Heart right ventricle (tissue), 16 donors: ENCODE measurements at regions of chr16 and their contacts with region 1.

Region 1: GRCh38 chr16:4475880-4476788 is at the start of gene HMOX2:
- DNase-seq: peak; percentile 90 to 95
- ATAC-seq: peak; percentile 94 to 96 (median 96)
- H3K4me3 ChIP-seq: peak within 1 kb of the TSS; percentile 82 to 99 (median 93)
- H3K27ac ChIP-seq: peak within 1 kb of the TSS; percentile 87 to 97 (median 94)
- H3K4me1 ChIP-seq: peaks cover 4 to 49% (median 35%) of the 10 kb centered on the region in 9 donors
- H3K27me3 ChIP-seq: no peaks in the 10 kb centered on the region
- CTCF ChIP-seq: peak in 8 of 9 donors; percentile 26 to 72 (median 44)
- total RNA-seq, gene HMOX2: 58.4 to 207 (median 84.8) TPM

Region 2: DNA sequence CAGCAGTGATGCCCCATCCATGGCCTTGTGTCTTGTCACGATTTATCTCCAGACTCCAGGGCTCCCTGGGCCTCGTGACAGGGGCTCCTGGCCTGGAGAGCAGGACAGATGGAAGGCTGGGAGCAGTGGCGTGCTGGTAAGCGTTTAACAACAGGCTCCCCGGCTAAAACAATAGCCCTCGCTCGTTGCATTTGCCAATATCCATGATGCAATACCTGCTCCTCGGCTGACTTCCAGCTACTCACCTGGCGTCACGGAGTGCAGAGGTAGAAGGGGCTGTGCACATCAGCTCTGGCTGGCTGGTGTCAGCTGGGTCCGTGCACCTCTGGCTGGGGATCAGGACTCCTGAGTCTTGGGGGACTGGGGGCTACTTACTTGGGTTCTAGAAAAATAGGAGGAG is 1437.9 kb before region 1 on chr16:
- intact Hi-C with region 1: loop called in 1 of 10 experiments (anchors 5 kb)
- DNase-seq: no peak
- ATAC-seq: no peak
- H3K4me3 ChIP-seq: no peak overlapping the region
- H3K27ac ChIP-seq: no peak overlapping the region
- H3K4me1 ChIP-seq: peaks cover 0 to 16% (median 7%) of the 10 kb centered on the region in 9 donors
- H3K27me3 ChIP-seq: peaks cover 16 to 99% (median 94%) of the 10 kb centered on the region in 7 donors
- CTCF ChIP-seq: no peak

Region 3: GRCh38 chr16:4425378-4426020 is 50.6 kb before region 1 on chr16 and contains the start of gene DNAJA3:
- intact Hi-C with region 1: loop called in 1 of 10 experiments (anchors 5 kb)
- DNase-seq: peak; percentile 90 to 93
- ATAC-seq: peak; percentile 97 to 99 (median 98)
- H3K4me3 ChIP-seq: peak within 1 kb of the TSS; percentile 69 to 97 (median 83)
- H3K27ac ChIP-seq: peak within 1 kb of the TSS; percentile 90 to 99 (median 96)
- H3K4me1 ChIP-seq: peaks cover 0 to 36% (median 21%) of the 10 kb centered on the region in 9 donors
- H3K27me3 ChIP-seq: no peaks in the 10 kb centered on the region
- CTCF ChIP-seq: peak in 1 of 9 donors; percentile 6
- total RNA-seq, gene DNAJA3: 51.4 to 76.7 (median 72.5) TPM

Region 4: GRCh38 chr16:4538350-4539235 is 62.5 kb after region 1 on chr16 and contains the start of gene CDIP1:
- intact Hi-C with region 1: loop called in 1 of 10 experiments (anchors 5 kb)
- DNase-seq: peak; percentile 97
- ATAC-seq: peak; percentile 94 to 97 (median 96)
- H3K4me3 ChIP-seq: peak within 1 kb of the TSS; percentile 72 to 98 (median 82)
- H3K27ac ChIP-seq: peak within 1 kb of the TSS; percentile 42 to 97 (median 92)
- H3K4me1 ChIP-seq: peaks cover 0 to 39% (median 24%) of the 10 kb centered on the region in 9 donors
- H3K27me3 ChIP-seq: no peaks in the 10 kb centered on the region
- CTCF ChIP-seq: peak in 4 of 9 donors; percentile 18 to 36 (median 26)
- total RNA-seq, gene CDIP1: 38.0 to 59.5 (median 47.0) TPM

Region 5: GRCh38 chr16:4743226-4743897 is 267.2 kb after region 1 on chr16:
- intact Hi-C with region 1: no loop called
- DNase-seq: no peak
- ATAC-seq: peak in 4 of 8 donors; percentile 13 to 43 (median 29)
- H3K4me3 ChIP-seq: peak overlapping the region in 3 of 10 donors; percentile 15 to 32 (median 21)
- H3K27ac ChIP-seq: no peak overlapping the region
- H3K4me1 ChIP-seq: peaks cover 0 to 22% (median 6%) of the 10 kb centered on the region in 9 donors
- H3K27me3 ChIP-seq: no peaks in the 10 kb centered on the region
- CTCF ChIP-seq: no peak